ENCODE measurements at regions of chr12 and their contacts with region 1.

Region 1: DNA sequence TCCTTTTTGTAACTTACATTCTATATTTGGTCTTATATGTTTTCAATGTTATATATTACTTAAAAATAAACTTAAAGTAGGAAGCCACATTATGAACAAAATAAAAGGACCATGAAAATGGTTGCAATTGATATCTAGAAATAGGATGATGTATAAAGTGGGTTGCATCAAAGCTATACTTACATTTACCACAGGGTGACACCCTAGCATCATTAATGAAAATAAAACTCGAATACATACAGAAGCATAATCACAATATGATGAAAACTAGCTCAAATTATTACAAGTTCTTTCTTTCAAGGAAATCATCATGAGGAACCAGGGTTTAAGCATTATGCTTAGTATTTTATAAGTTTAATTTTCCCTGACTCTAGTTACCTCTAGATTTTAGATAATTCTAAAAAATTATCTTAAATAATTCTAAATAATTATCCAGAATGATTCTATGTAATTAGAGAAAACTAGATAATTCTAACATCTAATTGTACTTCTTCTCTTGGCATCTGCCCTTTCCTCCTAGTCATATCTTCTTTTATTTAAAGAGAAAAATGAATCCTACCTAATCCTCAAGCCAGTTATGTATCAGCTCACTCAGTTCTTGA is 31.2 kb downstream of the TAS2R7 start:
- DNase-seq: peak in 2 of 5 donors; percentile 35
- H3K4me3 ChIP-seq: no peak overlapping the region
- H3K4me3 Mint-ChIP-seq: no peak overlapping the region
- H3K27ac ChIP-seq: no peak overlapping the region
- H3K27ac Mint-ChIP-seq: no peak overlapping the region
- H3K4me1 ChIP-seq: no peaks in the 10 kb centered on the region
- H3K4me1 Mint-ChIP-seq: no peaks in the 10 kb centered on the region
- H3K27me3 ChIP-seq: peaks cover 12% of the 10 kb centered on the region
- H3K27me3 Mint-ChIP-seq: peaks cover 19 to 59% of the 10 kb centered on the region in 2 donors

Region 2: DNA sequence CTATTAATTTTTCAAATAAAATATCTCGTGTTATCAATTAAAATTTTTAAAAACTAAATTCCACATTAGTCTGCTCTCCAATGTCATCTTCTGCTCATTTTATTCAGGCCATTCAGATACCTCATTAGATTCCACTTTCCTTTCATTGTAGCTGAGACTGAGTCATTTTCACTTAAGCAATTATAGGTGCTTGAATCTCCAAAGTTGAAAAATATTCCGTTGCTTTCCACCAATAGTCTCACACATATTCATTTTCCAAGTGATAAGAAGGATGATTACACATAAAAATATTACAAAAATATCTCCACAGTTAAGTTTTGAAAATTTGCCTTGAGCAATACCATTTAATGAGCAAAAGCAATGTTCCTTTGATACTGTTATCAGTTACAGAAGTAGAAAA is 11.6 kb before region 1 on chr12:
- CTCF ChIA-PET with region 1: no interaction called
- POLR2A ChIA-PET with region 1: no interaction called
- DNase-seq: no peak
- H3K4me3 ChIP-seq: no peak overlapping the region
- H3K4me3 Mint-ChIP-seq: no peak overlapping the region
- H3K27ac ChIP-seq: no peak overlapping the region
- H3K27ac Mint-ChIP-seq: no peak overlapping the region
- H3K4me1 ChIP-seq: no peaks in the 10 kb centered on the region
- H3K4me1 Mint-ChIP-seq: no peaks in the 10 kb centered on the region
- H3K27me3 ChIP-seq: peaks cover 9% of the 10 kb centered on the region
- H3K27me3 Mint-ChIP-seq: peaks cover 6 to 59% of the 10 kb centered on the region in 2 donors

Region 3: GRCh38 chr12:11202811-11203210 is 431.6 kb after region 1 on chr12:
- CTCF ChIA-PET with region 1: interaction called, 16 read pairs
- POLR2A ChIA-PET with region 1: no interaction called
- DNase-seq: no peak
- H3K4me3 ChIP-seq: no peak overlapping the region
- H3K4me3 Mint-ChIP-seq: no peak overlapping the region
- H3K27ac ChIP-seq: no peak overlapping the region
- H3K27ac Mint-ChIP-seq: no peak overlapping the region
- H3K4me1 ChIP-seq: no peaks in the 10 kb centered on the region
- H3K4me1 Mint-ChIP-seq: no peaks in the 10 kb centered on the region
- H3K27me3 ChIP-seq: no peaks in the 10 kb centered on the region
- H3K27me3 Mint-ChIP-seq: peaks cover 0 to 10% of the 10 kb centered on the region in 2 donors

Region 4: GRCh38 chr12:11486623-11487444 is 715.6 kb after region 1 on chr12:
- CTCF ChIA-PET with region 1: interaction called, 47 read pairs
- POLR2A ChIA-PET with region 1: no interaction called
- DNase-seq: peak; percentile 63 to 84 (median 73)
- H3K4me3 ChIP-seq: no peak overlapping the region
- H3K4me3 Mint-ChIP-seq: no peak overlapping the region
- H3K27ac ChIP-seq: no peak overlapping the region
- H3K27ac Mint-ChIP-seq: peak overlapping the region in 1 of 8 donors; percentile 1
- H3K4me1 ChIP-seq: peaks cover 3% of the 10 kb centered on the region
- H3K4me1 Mint-ChIP-seq: peaks cover 4 to 7% (median 6%) of the 10 kb centered on the region in 3 donors
- H3K27me3 ChIP-seq: no peaks in the 10 kb centered on the region
- H3K27me3 Mint-ChIP-seq: peaks cover 2 to 39% of the 10 kb centered on the region in 2 donors

Measured in CD8-positive, alpha-beta memory T cell (primary cell).